ENCODE measurements at regions of chr1 and their contacts with region 1.

Region 1: DNA sequence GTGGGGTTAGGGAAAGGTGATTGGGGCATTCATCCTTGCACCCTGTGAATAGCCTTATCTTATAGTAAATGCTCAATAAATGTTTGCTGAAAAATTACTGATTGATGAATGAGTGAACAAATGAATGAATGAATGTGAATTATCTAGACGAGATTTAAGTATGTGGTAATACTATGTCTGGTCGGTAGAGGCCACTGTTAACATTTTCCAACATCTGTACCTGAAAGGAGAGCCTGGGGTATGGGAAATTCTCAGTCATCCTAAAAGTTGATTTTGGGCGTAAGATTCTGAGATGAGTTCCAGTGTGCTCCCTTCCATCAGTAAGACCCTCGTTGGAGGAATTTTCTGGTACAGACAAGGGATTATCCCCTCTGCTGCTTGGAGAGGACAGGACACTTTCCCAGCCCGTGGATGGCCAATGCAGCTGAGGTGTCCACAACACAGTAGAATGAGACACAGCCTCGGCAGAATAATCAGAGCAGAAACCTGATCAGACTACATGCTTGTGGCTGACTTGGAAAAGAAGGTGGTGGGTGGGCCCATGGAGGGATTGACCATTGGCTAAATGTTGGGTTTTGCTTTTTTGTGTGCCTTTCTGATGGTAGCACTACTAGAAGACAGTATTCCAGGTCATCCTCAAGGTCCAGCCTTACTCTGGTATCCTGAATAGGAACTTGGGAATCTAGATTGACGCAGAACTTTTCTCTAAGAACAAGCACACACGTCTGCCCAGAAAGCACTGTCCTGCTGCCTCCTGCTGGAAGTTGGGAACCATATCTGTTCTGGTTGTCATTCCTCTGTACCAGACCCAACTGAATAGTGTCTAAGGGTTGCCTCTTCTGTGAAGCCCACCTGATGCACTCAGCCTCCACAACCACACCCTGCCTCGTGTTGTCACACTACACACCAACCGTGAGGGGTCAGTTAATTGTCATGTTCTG is 262.0 kb downstream of the TNR start:
- DNase-seq: peak; percentile 51
- H3K4me3 ChIP-seq: no peak overlapping the region
- H3K27ac ChIP-seq: no peak overlapping the region
- H3K4me1 ChIP-seq: no peaks in the 10 kb centered on the region
- H3K27me3 ChIP-seq: peaks cover 11% of the 10 kb centered on the region
- CTCF ChIP-seq: peak; percentile 71

Region 2: DNA sequence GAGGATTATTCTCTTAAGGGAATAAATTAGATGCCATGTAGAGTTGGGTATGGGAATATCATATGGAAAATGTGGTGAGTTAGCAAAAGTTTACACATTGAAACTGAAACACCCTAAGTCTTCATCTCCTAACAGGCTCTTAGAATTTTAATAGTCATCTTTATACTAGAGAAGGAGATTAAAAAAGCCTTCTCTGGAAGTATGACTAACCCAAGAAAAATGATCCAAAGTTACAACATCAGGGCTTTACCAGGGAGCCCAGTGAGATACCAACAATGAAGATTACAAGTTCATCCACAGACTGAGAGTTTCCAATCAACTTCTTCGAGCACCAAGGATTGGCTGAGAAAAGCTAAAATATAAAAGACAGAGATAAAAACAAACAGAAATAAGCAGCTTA is 218.8 kb before region 1 on chr1:
- CTCF ChIA-PET with region 1: no interaction called
- POLR2A ChIA-PET with region 1: no interaction called
- intact Hi-C with region 1: no loop called
- DNase-seq: no peak
- H3K4me3 ChIP-seq: no peak overlapping the region
- H3K27ac ChIP-seq: no peak overlapping the region
- H3K4me1 ChIP-seq: no peaks in the 10 kb centered on the region
- H3K27me3 ChIP-seq: no peaks in the 10 kb centered on the region
- CTCF ChIP-seq: no peak

Region 3: DNA sequence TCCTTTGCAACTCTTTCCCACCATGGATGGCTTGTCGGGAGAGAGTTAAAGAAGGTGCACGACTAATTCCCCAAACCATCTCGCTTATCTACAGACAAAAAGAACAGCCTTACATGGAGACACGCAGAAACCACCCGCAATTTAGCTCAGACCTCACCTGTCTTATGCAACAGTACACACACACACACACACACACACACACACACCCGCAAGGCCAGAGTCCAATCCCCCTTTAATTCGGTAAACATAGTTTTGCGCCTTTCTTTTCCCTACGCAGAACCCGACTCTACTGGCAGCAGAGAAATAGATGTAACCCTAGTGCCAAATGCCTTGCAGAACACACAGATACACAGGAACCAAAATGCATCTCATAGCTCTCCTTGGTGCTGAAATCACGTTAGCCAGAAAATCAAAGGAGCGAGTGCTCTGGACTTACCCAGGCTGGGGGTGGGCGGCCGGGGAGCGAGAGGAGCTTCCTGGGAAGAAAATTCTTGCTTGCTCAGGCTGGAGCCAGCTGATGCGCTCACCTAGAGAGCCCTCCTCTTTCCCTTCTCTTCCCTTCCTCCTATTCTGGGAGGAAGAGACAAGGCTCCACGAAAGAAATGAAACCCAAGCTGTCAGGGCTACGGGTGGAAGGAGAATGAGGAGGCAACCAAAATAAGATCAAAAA is 261.5 kb after region 1 on chr1:
- CTCF ChIA-PET with region 1: no interaction called
- POLR2A ChIA-PET with region 1: no interaction called
- intact Hi-C with region 1: loop called (anchors 1 kb)
- DNase-seq: peak; percentile 59
- H3K4me3 ChIP-seq: no peak overlapping the region
- H3K27ac ChIP-seq: no peak overlapping the region
- H3K4me1 ChIP-seq: no peaks in the 10 kb centered on the region
- H3K27me3 ChIP-seq: peaks cover 21% of the 10 kb centered on the region
- CTCF ChIP-seq: no peak

Region 4: DNA sequence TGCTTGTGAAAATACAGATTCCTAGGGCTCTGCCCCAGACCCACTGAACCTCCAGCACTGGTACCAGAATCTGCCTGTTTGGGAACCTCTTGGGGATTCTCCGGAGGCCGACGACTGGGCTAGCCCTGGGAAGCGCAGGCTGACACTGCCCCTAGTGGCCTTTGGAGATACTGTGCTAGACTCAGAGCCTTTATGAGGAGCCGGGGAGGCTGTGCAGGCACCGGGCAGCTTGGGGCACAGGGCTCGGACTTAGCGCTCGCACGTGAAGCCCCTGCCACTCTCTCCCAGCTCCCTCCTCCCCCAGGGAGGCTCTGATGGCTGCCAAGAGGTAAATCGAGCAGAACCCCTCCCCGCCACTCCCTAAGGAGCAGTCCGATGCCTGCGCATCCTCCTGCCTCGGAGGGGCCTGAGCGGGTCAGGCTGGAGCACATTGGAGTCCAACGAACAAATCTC is 406.6 kb after region 1 on chr1:
- CTCF ChIA-PET with region 1: no interaction called
- POLR2A ChIA-PET with region 1: no interaction called
- intact Hi-C with region 1: loop called (anchors 10 kb)
- DNase-seq: peak; percentile 70
- H3K4me3 ChIP-seq: no peak overlapping the region
- H3K27ac ChIP-seq: no peak overlapping the region
- H3K4me1 ChIP-seq: no peaks in the 10 kb centered on the region
- H3K27me3 ChIP-seq: no peaks in the 10 kb centered on the region
- CTCF ChIP-seq: peak; percentile 86

Region 5: DNA sequence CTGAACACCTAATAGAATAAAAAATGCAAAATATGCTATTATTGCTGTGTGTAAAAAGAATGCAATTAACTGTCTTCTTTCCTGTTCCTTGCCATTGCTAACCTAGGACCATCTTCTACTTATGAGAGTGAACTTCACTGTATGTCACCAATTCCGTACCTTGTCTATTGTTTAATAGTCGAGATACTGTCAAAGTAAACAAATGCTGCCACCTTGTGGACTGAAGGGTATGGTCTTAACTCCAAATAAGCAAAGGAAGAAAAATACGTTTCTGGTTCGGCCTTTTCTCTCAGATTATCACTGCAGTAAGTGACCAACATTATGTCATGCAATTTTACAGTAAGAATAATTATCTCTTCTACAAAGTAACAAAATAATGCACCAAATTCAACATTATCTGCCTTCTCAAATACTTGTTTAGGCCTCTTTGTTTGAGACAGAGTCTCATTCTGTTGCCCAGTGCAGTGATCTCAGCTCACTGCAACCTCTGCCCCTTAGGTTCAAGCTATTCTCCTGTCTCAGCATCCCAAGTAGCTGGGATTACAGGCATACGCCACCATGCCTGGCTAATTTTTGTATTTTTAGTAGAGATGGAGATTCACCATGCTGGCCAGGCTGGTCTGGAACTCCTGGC is 592.2 kb after region 1 on chr1:
- CTCF ChIA-PET with region 1: no interaction called
- POLR2A ChIA-PET with region 1: no interaction called
- intact Hi-C with region 1: loop called (anchors 5 kb)
- DNase-seq: peak; percentile 77
- H3K4me3 ChIP-seq: no peak overlapping the region
- H3K27ac ChIP-seq: no peak overlapping the region
- H3K4me1 ChIP-seq: no peaks in the 10 kb centered on the region
- H3K27me3 ChIP-seq: no peaks in the 10 kb centered on the region
- CTCF ChIP-seq: peak; percentile 77

Measured in A673 (cell line).